Gastrocnemius medialis (tissue), 4 donors: ENCODE measurements at regions of chr17 and their contacts with region 1.

Region 1: GRCh38 chr17:11170881-11171280 is 70.1 kb upstream of the SHISA6 start:
- DNase-seq: no peak
- ATAC-seq: no peak
- H3K4me3 ChIP-seq: no peak overlapping the region
- H3K27ac ChIP-seq: no peak overlapping the region
- H3K4me1 ChIP-seq: no peaks in the 10 kb centered on the region
- H3K27me3 ChIP-seq: no peaks in the 10 kb centered on the region
- CTCF ChIP-seq: no peak
- POLR2A ChIP-seq: no peak

Region 2: DNA sequence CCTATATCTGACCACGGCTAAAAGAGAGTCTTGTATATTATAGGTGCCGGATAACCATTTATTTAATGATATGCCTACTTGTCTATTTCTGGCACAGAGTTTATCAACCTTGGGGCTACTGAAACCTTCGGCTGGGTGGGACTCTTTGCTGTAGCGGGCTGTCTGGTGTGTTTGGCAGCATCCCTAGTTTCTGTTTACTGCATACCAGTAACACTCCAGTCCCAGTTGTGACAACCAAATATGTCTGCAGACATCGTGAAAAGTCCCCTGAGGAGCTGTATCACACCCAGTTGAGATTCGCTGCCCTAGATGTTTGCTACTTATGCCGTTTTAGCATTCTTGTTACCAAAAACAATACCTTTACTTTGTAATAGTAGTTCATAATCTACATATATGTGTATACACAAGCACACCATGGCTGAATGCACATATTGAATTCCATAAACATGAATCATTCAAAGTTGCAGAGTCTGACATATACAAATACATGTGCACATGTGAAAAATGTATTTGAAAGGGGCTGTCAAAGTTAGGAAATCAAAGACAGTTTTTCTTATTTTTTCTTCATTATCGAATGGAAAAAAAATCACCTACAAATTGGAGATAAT is 19.0 kb before region 1 on chr17:
- in situ Hi-C with region 1: no loop called
- intact Hi-C with region 1: no loop called
- DNase-seq: no peak
- ATAC-seq: no peak
- H3K4me3 ChIP-seq: no peak overlapping the region
- H3K27ac ChIP-seq: no peak overlapping the region
- H3K4me1 ChIP-seq: no peaks in the 10 kb centered on the region
- H3K27me3 ChIP-seq: no peaks in the 10 kb centered on the region
- CTCF ChIP-seq: no peak
- POLR2A ChIP-seq: no peak

Region 3: DNA sequence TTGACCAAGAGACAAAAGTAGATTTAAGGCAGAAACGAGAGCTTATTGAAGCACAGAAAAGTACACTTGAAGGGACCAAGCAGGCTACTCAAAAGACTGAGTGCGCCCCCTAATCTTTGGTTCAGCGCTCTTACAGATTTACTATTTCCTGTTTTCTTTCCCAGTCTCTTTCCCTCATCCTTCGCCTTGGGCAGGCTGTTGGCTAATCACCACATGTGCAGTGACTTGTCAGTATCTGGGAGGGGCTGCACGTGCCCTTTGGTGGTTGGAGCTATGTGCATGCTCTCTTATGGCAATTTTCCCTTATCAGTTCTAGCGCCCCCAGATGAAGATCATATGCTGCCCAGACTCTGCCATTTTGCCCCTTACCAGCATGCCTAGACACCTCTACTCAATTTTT is 34.8 kb after region 1 on chr17:
- in situ Hi-C with region 1: no loop called
- intact Hi-C with region 1: no loop called
- DNase-seq: no peak
- ATAC-seq: no peak
- H3K4me3 ChIP-seq: no peak overlapping the region
- H3K27ac ChIP-seq: no peak overlapping the region
- H3K4me1 ChIP-seq: no peaks in the 10 kb centered on the region
- H3K27me3 ChIP-seq: no peaks in the 10 kb centered on the region
- CTCF ChIP-seq: no peak
- POLR2A ChIP-seq: no peak

Region 4: DNA sequence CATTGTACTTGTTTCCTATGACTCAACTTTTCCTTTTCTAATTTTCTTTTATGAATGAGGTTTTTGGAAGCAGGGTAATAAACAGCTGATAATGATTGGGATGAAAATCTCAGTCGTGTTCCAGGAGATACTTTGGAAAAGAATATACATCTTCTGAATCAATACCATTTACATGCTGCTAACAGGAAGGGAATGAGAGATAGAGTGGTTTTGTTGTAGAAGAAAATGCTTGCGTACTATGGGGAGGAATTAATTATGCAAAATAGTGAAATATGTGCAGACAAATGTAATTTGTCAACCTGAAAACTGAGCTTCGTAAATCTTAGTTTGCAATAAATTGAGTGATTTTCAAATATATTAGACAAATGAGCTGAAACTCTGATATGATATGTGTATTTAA is 46.1 kb after region 1 on chr17:
- in situ Hi-C with region 1: loop called in 1 of 4 experiments (anchors 5 kb)
- intact Hi-C with region 1: no loop called
- DNase-seq: no peak
- ATAC-seq: no peak
- H3K4me3 ChIP-seq: no peak overlapping the region
- H3K27ac ChIP-seq: no peak overlapping the region
- H3K4me1 ChIP-seq: no peaks in the 10 kb centered on the region
- H3K27me3 ChIP-seq: no peaks in the 10 kb centered on the region
- CTCF ChIP-seq: no peak
- POLR2A ChIP-seq: no peak

Region 5: DNA sequence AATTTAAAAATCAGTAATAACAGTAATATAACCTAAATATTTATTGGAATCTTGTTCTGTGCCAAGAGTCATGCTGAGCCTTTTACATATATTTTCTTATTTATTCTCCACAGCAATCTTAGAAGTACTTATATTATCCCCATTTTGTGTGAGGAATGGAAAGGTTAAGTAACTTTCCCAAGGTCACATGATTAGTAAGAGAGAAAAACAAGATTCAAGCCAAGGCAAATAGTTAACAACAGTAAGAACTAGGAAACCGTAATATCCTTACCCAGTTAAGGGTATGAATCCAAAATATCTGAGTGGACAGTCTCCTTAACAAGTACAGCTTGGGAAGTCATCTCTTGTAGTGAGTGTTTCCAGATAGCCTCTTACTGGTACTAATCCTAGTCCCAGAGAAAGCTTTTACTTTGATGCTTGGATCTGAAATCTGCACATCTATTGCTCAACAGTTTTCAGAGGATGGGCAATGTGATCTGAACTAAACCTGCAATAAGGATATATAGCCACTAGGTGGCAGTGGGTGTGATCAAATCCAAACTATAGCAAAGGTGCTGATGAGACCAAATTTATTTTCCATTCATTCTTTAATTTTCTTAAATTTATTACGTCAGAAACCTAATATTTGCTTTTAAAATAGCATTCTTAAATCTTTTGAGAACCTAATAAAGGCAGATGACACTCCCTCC is 93.4 kb after region 1 on chr17:
- in situ Hi-C with region 1: loop called in 1 of 4 experiments (anchors 25 kb)
- intact Hi-C with region 1: no loop called
- DNase-seq: no peak
- ATAC-seq: no peak
- H3K4me3 ChIP-seq: no peak overlapping the region
- H3K27ac ChIP-seq: no peak overlapping the region
- H3K4me1 ChIP-seq: no peaks in the 10 kb centered on the region
- H3K27me3 ChIP-seq: no peaks in the 10 kb centered on the region
- CTCF ChIP-seq: peak in 1 of 5 experiments; percentile 19
- POLR2A ChIP-seq: no peak